ENCODE measurements at regions of chr11 and their contacts with region 1.

Region 1: GRCh38 chr11:109939166-109939810 is 153.9 kb upstream of the ZC3H12C start:
- DNase-seq: peak; percentile 41 to 72 (median 53)
- ATAC-seq: peak; percentile 91
- H3K4me3 ChIP-seq: no peak overlapping the region
- H3K27ac ChIP-seq: no peak overlapping the region
- H3K4me1 ChIP-seq: peaks cover 0 to 5% of the 10 kb centered on the region in 2 experiments; a peak in 2 of 5 replicates
- H3K27me3 ChIP-seq: no peaks in the 10 kb centered on the region
- CTCF ChIP-seq: peak; percentile 67 to 81 (median 73)
- EP300 ChIP-seq: no peak
- POLR2A ChIP-seq: no peak
- RAD21 ChIP-seq: peak; percentile 90 to 94

Region 2: DNA sequence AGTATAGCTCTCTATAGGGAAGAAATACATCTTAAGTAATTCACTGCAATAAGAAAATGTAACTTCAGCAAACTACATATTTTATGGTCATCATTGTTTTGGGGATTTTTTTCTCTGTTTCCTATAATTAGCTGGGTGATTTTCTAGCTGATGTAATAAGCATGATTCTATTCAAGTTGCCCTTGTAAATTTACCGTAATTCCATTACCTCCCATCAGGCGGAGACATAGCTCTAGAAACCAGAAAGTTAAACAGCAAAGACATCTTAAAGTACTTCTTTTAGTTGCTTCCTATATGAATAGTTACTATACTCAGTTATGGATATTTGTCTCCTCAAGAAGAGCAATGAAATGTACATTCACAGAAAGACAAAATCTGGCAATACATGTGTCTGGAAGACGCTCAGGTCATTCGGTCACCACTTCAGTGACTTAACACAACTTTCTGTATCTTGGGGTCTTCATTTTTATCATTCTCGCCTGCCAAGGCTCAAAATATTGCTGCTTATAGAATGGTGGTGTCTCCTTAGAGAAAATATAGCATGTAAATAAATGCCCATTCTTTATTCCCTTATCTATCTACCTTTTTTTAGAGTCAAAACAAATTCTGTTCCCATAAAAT is 86.0 kb before region 1 on chr11:
- CTCF ChIA-PET with region 1: interaction called, 26 read pairs
- POLR2A ChIA-PET with region 1: no interaction called
- in situ Hi-C with region 1: loop called (anchors 5 kb)
- intact Hi-C with region 1: loop called (anchors 1 kb)
- DNase-seq: peak; percentile 13 to 60 (median 26)
- ATAC-seq: peak; percentile 85
- H3K4me3 ChIP-seq: no peak overlapping the region
- H3K27ac ChIP-seq: no peak overlapping the region
- H3K4me1 ChIP-seq: peaks cover 0 to 3% of the 10 kb centered on the region in 2 experiments; a peak in 1 of 5 replicates
- H3K27me3 ChIP-seq: no peaks in the 10 kb centered on the region
- CTCF ChIP-seq: peak; percentile 57 to 88 (median 63)
- EP300 ChIP-seq: no peak
- POLR2A ChIP-seq: no peak
- RAD21 ChIP-seq: peak; percentile 91 to 97

Region 3: DNA sequence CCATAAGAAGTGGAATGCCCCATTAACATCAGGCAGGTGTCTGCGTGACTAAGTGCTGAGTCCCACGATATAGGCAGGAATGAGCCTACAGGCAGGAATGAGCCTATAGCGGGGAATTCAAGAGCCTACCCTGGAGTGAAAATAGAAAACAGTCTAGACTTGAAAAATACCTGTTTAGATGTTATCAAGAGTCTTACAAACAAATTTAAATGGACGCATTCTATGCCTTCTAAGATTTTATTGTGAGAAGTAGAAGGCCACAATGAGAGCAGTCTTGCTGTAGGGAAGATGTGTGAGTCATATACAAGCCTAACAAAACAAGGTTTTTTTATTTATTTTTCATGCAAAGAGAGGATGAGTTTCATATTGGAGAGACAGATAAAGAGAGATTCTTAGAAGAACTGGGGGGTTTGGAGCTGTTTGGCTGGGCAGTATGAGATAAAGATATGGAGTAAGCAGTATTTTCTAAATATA is 46.9 kb before region 1 on chr11:
- CTCF ChIA-PET with region 1: no interaction called
- POLR2A ChIA-PET with region 1: no interaction called
- in situ Hi-C with region 1: no loop called
- intact Hi-C with region 1: loop called (anchors 5 kb)
- DNase-seq: peak; percentile 30 to 74 (median 44)
- ATAC-seq: peak; percentile 71
- H3K4me3 ChIP-seq: no peak overlapping the region
- H3K27ac ChIP-seq: peak overlapping the region; percentile 59
- H3K4me1 ChIP-seq: peaks cover 7 to 31% of the 10 kb centered on the region in 2 experiments; a peak in 4 of 5 replicates
- H3K27me3 ChIP-seq: no peaks in the 10 kb centered on the region
- CTCF ChIP-seq: no peak
- EP300 ChIP-seq: peak; percentile 89; the same call in 1 of the 2 replicates
- POLR2A ChIP-seq: no peak
- RAD21 ChIP-seq: no peak

Region 4: GRCh38 chr11:109902764-109903433 is 36.4 kb before region 1 on chr11:
- CTCF ChIA-PET with region 1: no interaction called
- POLR2A ChIA-PET with region 1: no interaction called
- in situ Hi-C with region 1: no loop called
- intact Hi-C with region 1: no loop called
- DNase-seq: peak in 1 of 4 experiments; percentile 36
- ATAC-seq: peak; percentile 48; the same call in 2 of the 3 replicates
- H3K4me3 ChIP-seq: no peak overlapping the region
- H3K27ac ChIP-seq: peak overlapping the region; percentile 53
- H3K4me1 ChIP-seq: peaks cover 0 to 5% of the 10 kb centered on the region in 2 experiments; a peak in 1 of 5 replicates
- H3K27me3 ChIP-seq: no peaks in the 10 kb centered on the region
- CTCF ChIP-seq: no peak
- EP300 ChIP-seq: no peak
- POLR2A ChIP-seq: no peak
- RAD21 ChIP-seq: no peak

Region 5: GRCh38 chr11:109926941-109927340 is 12.3 kb before region 1 on chr11:
- CTCF ChIA-PET with region 1: no interaction called
- POLR2A ChIA-PET with region 1: no interaction called
- in situ Hi-C with region 1: no loop called
- intact Hi-C with region 1: no loop called
- DNase-seq: no peak
- ATAC-seq: no peak
- H3K4me3 ChIP-seq: no peak overlapping the region
- H3K27ac ChIP-seq: no peak overlapping the region
- H3K4me1 ChIP-seq: no peaks in the 10 kb centered on the region
- H3K27me3 ChIP-seq: no peaks in the 10 kb centered on the region
- CTCF ChIP-seq: no peak
- EP300 ChIP-seq: no peak
- POLR2A ChIP-seq: no peak
- RAD21 ChIP-seq: no peak

Measured in K562 (cell line).